ENCODE measurements at regions of chr2 and their contacts with region 1.

Region 1: DNA sequence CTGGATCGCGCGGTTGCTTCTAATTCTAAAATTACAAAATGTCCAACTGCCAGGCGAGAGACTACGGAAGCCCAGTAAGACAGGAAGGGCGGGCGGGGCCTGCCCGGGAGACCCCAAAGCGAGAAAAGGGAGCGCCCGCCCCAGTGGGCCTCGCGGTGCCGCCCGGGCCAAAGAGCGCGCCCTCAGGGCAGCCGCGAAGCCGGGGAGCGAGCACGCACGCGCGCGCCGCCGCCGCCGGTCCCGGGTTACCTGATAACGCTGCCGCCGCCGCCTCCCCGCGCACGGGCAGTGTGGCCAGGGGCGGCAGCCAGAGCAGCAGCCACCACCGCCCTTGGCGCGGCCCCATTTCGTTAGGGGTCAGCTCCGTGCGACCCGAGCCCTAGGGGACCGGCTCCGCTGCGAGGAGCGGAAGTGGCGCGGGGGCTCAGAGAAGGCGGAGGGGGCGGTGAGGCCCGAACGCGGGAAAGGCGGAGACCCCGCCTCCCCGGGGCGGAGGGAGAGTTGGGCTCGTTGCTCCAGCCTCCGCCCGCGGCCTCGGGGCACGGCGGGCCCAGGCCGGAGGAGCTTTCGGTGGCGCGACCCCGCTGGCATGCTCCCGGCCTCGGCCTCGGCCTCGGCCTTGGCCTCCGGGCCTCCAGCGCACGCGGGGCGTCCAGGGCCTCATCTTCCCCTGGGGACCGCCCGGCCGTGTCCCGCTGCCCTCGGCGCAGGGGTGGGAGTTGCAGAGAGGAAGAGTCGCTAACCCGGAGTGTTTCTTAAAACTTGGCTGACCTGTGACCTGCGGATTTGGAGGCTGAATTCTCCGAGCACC is at the start of gene NEMP2:
- DNase-seq: peak; percentile 92
- ATAC-seq: peak; percentile 97
- total RNA-seq, gene NEMP2: 1.7 TPM

Region 2: DNA sequence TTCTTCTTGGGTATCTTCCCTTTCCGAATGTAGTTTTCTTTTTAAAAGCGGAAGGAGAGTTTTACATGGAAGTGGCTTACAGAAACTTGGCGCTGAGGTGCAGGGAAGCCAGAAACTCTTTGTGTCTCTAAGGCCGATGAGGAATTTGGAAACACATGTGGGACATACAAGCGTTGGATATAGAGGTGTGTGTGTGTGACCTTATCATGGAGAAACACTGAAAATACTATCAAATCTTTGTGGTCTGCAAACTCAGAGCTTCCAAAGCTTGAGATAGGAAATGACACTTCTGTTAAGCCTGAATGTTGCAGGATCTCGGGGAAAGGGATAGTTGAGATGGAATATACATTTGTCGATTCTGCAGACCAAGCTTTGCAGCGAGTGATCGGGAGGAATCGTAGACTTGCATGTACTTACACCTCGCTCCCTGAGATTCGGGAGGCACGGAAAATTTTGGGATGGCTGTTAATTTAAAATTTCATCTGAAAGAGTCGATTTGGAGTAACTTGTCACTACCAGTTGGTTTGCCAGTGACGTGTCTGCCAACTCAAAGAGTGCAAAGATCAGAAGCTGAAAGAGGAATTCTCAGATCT is 115.4 kb after region 1 on chr2:
- intact Hi-C with region 1: loop called (anchors 5 kb)
- DNase-seq: no peak
- ATAC-seq: peak; percentile 24

Measured in Right ventricle myocardium superior (tissue), 1 donor.